ENCODE measurements at regions of chr9 and their contacts with region 1.

Region 1: DNA sequence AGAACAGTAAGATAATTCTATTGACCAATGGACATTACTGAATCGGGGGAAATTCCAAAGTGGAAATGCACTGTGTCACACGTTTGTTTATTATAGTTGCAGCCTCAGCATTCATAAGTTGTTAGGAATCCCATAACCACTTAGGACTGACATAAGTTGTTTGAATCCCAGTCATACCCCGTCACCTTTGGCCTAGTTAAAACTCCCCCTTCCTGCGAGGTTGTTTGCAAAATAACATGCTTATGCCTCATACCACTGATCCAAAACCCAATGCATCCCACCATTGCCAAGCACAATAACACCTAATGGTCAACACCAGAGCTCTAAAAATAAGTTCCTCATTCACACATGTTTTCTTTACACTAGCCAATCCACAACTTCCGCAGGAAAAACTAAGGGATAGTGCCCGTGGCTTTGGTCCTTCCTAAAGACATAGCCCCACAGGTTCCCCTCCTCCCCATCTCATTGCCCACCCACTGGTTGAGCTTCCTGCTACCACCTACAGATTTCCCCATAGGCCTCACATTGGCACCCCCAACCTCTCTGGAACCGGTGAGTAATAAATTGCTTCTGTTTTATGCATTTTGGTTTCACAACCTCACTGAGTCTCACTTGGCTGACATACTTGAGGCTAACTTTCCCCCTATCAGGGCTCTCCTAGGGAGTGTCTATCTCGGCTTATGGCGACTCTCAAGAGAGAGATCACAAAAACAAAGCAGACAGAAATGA is 42.3 kb upstream of the MUSK start:
- DNase-seq: peak; percentile 80
- H3K4me3 ChIP-seq: no peak overlapping the region
- H3K27ac ChIP-seq: peak overlapping the region; percentile 75
- H3K27me3 ChIP-seq: no peaks in the 10 kb centered on the region
- CTCF ChIP-seq: no peak

Region 2: DNA sequence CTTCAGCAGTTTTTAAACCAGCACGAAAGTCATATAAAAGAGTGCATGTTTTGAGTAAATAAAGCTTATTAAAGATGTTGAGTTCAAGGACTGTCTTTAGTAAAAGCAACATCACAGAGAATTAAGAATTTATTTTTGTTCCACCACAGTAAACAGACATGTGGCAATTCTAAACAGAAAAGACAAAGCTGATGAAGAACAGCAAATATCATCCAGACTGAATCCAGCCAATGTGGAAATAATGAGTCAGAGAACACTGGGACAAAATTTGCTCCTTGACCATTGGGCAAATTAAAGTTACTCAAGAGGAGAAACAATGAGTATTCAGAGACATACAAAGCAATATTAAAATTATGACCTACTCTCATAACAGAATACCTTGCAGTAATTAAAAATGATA is 674.9 kb after region 1 on chr9:
- in situ Hi-C with region 1: loop called (anchors 25 kb)
- DNase-seq: peak; percentile 9
- H3K4me3 ChIP-seq: no peak overlapping the region
- H3K27ac ChIP-seq: no peak overlapping the region
- H3K27me3 ChIP-seq: no peaks in the 10 kb centered on the region
- CTCF ChIP-seq: no peak

Measured in brain microvascular endothelial cell (primary cell).